ENCODE measurements at regions of chr20 and their contacts with region 1.

Region 1: GRCh38 chr20:63272584-63273579 is at the start of gene ARFGAP1:
- DNase-seq: peak; percentile 91
- H3K4me3 Mint-ChIP-seq: peak within 1 kb of the TSS; percentile 91
- H3K27ac Mint-ChIP-seq: peak within 1 kb of the TSS; percentile 82
- H3K4me1 Mint-ChIP-seq: peaks cover 26% of the 10 kb centered on the region
- H3K27me3 Mint-ChIP-seq: no peaks in the 10 kb centered on the region
- total RNA-seq, gene ARFGAP1: 80.1 to 82.0 TPM

Region 2: GRCh38 chr20:63216041-63216848 is 56.6 kb before region 1 on chr20 and contains the start of gene YTHDF1:
- CTCF ChIA-PET with region 1: no interaction called
- POLR2A ChIA-PET with region 1: interaction called, 13 read pairs
- DNase-seq: peak; percentile 97
- H3K4me3 Mint-ChIP-seq: peak within 1 kb of the TSS; percentile 94
- H3K27ac Mint-ChIP-seq: peak within 1 kb of the TSS; percentile 82
- H3K4me1 Mint-ChIP-seq: peaks cover 40% of the 10 kb centered on the region
- H3K27me3 Mint-ChIP-seq: peaks cover 5% of the 10 kb centered on the region
- total RNA-seq, gene YTHDF1: 36.1 to 36.8 TPM